Caco-2 (cell line): ENCODE measurements at regions of chr11 and their contacts with region 1.

Region 1: GRCh38 chr11:109783842-109784241 is 309.4 kb upstream of the ZC3H12C start:
- DNase-seq: no peak
- H3K4me3 ChIP-seq: no peak overlapping the region
- H3K4me3 Mint-ChIP-seq: no peak overlapping the region
- H3K27ac Mint-ChIP-seq: no peak overlapping the region
- H3K4me1 ChIP-seq: no peaks in the 10 kb centered on the region
- H3K4me1 Mint-ChIP-seq: no peaks in the 10 kb centered on the region
- H3K27me3 ChIP-seq: no peaks in the 10 kb centered on the region
- H3K27me3 Mint-ChIP-seq: peaks cover 18% of the 10 kb centered on the region
- CTCF ChIP-seq: no peak

Region 2: DNA sequence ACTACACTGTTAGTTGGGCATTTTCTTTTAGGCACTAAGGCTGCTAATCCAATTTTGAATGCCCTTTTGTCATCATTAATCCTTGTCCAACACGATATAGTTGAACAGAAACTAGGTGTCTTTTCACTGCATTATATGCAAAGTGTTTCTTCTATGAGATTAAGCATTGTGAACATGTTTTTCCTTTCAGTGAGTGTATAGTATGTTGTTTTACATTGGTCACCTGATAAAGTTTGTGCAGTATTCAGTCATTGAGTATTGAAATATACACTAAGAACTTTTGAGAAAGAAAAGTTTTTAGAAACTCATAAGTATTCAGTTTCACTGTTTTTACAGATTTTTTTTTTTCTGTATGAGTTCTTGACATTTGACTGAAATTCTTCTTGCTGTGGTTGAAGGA is 368.4 kb after region 1 on chr11:
- CTCF ChIA-PET with region 1: no interaction called
- POLR2A ChIA-PET with region 1: no interaction called
- intact Hi-C with region 1: loop called (anchors 5 kb)
- DNase-seq: no peak
- H3K4me3 ChIP-seq: no peak overlapping the region
- H3K4me3 Mint-ChIP-seq: no peak overlapping the region
- H3K27ac Mint-ChIP-seq: no peak overlapping the region
- H3K4me1 ChIP-seq: no peaks in the 10 kb centered on the region
- H3K4me1 Mint-ChIP-seq: no peaks in the 10 kb centered on the region
- H3K27me3 ChIP-seq: no peaks in the 10 kb centered on the region
- H3K27me3 Mint-ChIP-seq: no peaks in the 10 kb centered on the region
- CTCF ChIP-seq: no peak